ENCODE measurements at regions of chr10 and their contacts with region 1.

Region 1: GRCh38 chr10:87659571-87660483 is at the start of gene PAPSS2:
- DNase-seq: no peak
- ATAC-seq: peak; percentile 65
- H3K4me3 ChIP-seq: peak within 1 kb of the TSS; percentile 74
- H3K27ac ChIP-seq: no peak within 1 kb of the TSS
- H3K4me1 ChIP-seq: no peaks in the 10 kb centered on the region; the same call in 1 of the 2 replicates
- H3K27me3 ChIP-seq: peaks cover 3 to 4% of the 10 kb centered on the region in 2 experiments
- CTCF ChIP-seq: no peak
- EP300 ChIP-seq: no peak
- POLR2A ChIP-seq: 0 out of 2 replicates have a peak, but pooled peaks have one; percentile 22
- RAD21 ChIP-seq: no peak
- polyA plus RNA-seq, gene PAPSS2: 0.29 to 0.31 TPM

Region 2: DNA sequence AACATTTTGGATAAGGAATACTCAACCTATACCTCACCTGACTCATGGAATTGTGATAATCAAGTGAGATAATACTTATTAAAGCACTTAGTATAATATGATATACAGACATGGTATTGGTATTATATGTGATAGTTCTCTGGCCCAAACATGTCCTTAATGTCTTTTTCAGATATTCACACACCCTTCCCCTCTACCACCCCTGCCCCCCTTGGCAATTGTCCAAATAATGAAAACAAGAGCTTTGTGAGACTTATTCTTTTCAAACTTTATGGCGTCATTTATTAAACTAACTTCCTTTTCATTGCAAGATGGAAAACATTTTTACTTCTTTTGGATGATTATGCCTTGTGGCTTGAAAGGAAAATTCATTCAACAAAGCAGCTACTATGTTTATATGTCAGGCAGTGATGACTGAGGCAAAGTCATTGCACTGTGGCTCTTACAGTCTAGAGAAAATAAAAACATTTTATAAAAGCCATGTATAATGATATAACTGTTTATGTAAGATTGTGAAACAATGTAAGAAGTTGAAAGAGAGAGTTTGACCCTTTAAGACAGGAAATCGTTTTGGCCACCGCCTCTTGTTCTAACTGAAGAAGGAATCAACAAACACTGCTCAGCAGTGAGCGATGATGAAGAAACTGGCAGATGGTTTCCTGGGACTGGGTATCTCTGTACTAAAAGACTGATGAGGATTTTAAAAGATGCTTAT is 127.8 kb before region 1 on chr10:
- CTCF ChIA-PET with region 1: interaction called, 3 read pairs
- POLR2A ChIA-PET with region 1: no interaction called
- RAD21 ChIA-PET with region 1: no interaction called
- SMC1A ChIA-PET with region 1: no interaction called
- in situ Hi-C with region 1: no loop called
- intact Hi-C with region 1: loop called (anchors 1 kb)
- DNase-seq: no peak
- ATAC-seq: no peak
- H3K4me3 ChIP-seq: no peak overlapping the region
- H3K27ac ChIP-seq: no peak overlapping the region
- H3K4me1 ChIP-seq: peaks cover 17% of the 10 kb centered on the region
- H3K27me3 ChIP-seq: no peaks in the 10 kb centered on the region
- CTCF ChIP-seq: no peak
- EP300 ChIP-seq: no peak
- POLR2A ChIP-seq: no peak
- RAD21 ChIP-seq: no peak

Region 3: DNA sequence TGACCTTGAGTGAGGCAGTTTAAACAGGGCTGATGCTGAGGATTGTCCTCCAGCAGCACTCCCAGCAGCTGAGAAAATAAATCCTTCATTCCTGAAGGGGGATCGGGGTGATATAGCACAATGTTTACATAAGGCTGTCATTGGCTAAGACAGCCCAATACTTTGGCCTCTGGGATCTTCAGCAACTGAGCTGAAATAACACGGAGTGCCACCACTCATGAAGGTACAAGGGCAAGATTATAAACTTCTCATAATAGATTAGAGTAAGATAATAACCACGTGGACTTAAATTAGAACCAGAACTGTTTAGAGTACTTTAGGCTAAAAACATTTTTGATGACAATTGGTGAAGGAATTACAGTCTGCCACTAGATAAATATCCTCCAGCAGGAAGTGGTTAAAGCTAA is 70.2 kb before region 1 on chr10:
- CTCF ChIA-PET with region 1: no interaction called
- POLR2A ChIA-PET with region 1: no interaction called
- RAD21 ChIA-PET with region 1: no interaction called
- SMC1A ChIA-PET with region 1: no interaction called
- in situ Hi-C with region 1: no loop called
- intact Hi-C with region 1: no loop called
- DNase-seq: no peak
- ATAC-seq: no peak
- H3K4me3 ChIP-seq: no peak overlapping the region
- H3K27ac ChIP-seq: no peak overlapping the region
- H3K4me1 ChIP-seq: no peaks in the 10 kb centered on the region
- H3K27me3 ChIP-seq: no peaks in the 10 kb centered on the region
- CTCF ChIP-seq: no peak
- EP300 ChIP-seq: no peak
- POLR2A ChIP-seq: no peak
- RAD21 ChIP-seq: no peak